ENCODE measurements at regions of chr2 and their contacts with region 1.

Region 1: GRCh38 chr2:88711903-88712302 is 20.4 kb downstream of the RPIA start:
- DNase-seq: no peak
- ATAC-seq: no peak
- H3K4me3 ChIP-seq: no peak overlapping the region
- H3K27ac ChIP-seq: no peak overlapping the region
- H3K4me1 ChIP-seq: no peaks in the 10 kb centered on the region
- H3K27me3 ChIP-seq: no peaks in the 10 kb centered on the region
- CTCF ChIP-seq: no peak
- EP300 ChIP-seq: no peak
- POLR2A ChIP-seq: no peak
- RAD21 ChIP-seq: no peak

Region 2: GRCh38 chr2:88698498-88699233 is 13.2 kb before region 1 on chr2:
- CTCF ChIA-PET with region 1: interaction called, 10 read pairs
- POLR2A ChIA-PET with region 1: interaction called, 5 read pairs
- RAD21 ChIA-PET with region 1: no interaction called
- SMC1A ChIA-PET with region 1: interaction called, 4 read pairs
- in situ Hi-C with region 1: no loop called
- intact Hi-C with region 1: no loop called
- DNase-seq: no peak
- ATAC-seq: no peak
- H3K4me3 ChIP-seq: no peak overlapping the region
- H3K27ac ChIP-seq: no peak overlapping the region
- H3K4me1 ChIP-seq: no peaks in the 10 kb centered on the region; the same call in 1 of the 2 replicates
- H3K27me3 ChIP-seq: no peaks in the 10 kb centered on the region
- CTCF ChIP-seq: no peak
- EP300 ChIP-seq: no peak
- POLR2A ChIP-seq: no peak
- RAD21 ChIP-seq: no peak

Measured in GM12878 (cell line).